OCI-LY7 (cell line): ENCODE measurements at regions of chr1 and their contacts with region 1.

Region 1: GRCh38 chr1:219076326-219076937 is 97.2 kb upstream of the LYPLAL1 start:
- DNase-seq: no peak
- H3K4me3 ChIP-seq: no peak overlapping the region
- H3K27ac ChIP-seq: no peak overlapping the region
- H3K4me1 ChIP-seq: no peaks in the 10 kb centered on the region
- CTCF ChIP-seq: no peak

Region 2: DNA sequence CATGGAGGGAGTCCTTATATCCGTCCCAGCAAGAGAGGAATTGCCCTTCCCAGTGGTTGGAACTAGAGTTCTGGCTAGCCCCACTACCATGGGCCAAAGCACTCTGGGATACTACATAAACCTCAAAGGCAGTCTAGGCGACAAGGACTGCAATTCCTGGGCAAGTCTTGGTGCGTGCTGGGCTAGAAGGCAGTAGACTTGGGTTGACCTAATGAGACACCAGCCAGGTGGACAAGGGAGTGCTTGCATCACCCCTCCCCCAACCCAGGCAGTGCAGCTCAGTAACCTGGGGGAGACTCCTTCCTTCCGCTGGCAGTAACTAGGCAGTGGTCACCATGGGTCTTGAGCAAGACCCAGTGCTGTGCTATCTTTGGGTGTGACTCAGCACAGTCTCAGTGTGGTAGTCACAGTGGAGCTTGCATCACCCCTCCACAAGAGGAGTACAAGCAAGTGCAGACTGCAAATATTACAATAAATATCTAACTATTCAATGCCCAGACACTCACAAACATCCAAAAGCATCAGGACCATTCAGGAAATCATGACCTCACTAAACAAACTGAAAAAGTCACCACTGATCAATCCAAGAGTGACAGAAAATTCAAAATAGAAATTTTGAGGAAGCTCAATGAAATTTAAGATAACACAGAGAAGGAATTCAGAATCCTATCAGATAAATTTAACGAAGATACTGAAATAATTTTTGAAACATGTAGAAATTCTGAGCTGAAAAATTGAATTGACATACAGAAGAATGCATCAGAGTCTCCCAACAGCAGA is 12.5 kb after region 1 on chr1:
- CTCF ChIA-PET with region 1: no interaction called
- POLR2A ChIA-PET with region 1: interaction called, 11 read pairs
- intact Hi-C with region 1: no loop called
- DNase-seq: no peak
- H3K4me3 ChIP-seq: no peak overlapping the region
- H3K27ac ChIP-seq: no peak overlapping the region
- H3K4me1 ChIP-seq: peaks cover 12% of the 10 kb centered on the region
- CTCF ChIP-seq: no peak

Region 3: DNA sequence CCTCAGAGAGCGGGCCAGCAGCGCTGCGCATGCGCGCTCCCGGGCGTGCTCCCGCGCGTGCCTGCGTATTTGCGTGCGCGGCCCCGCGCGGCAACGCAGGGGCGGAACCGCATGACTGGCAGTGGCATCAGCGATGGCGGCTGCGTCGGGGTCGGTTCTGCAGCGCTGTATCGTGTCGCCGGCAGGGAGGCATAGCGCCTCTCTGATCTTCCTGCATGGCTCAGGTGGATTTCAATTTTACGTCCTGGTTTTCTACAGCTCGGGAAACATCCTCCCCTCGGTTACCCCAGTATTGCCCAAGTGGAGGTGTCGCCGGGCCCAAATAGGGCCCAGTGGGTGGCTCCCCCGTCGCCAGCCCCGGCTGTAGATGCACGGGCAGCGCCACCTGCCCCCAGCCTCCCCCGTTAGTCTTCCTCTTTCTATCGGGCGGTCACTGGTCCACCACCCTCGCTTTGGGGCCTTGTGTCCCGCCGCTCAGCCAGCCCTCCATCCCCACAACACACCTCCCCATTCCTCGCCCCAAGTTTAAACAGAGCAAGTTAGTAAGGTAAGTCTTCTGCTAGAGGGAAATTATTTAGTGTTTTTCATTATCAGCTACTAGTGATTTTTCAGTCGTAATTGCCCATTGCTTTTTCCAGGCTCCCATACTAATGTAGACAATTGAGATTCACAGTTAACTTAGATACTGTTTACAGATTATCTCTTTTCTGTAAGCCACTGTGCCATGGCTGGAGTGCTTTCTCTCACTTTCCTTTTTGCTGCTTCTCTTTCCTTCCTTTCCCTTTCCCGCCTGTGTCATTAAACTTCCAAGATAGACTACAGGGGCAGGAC is 97.5 kb after region 1 on chr1 and contains the start of gene LYPLAL1:
- CTCF ChIA-PET with region 1: no interaction called
- POLR2A ChIA-PET with region 1: no interaction called
- intact Hi-C with region 1: no loop called
- DNase-seq: peak; percentile 92
- H3K4me3 ChIP-seq: peak within 1 kb of the TSS; percentile 85
- H3K27ac ChIP-seq: peak within 1 kb of the TSS; percentile 39
- H3K4me1 ChIP-seq: peaks cover 15% of the 10 kb centered on the region
- CTCF ChIP-seq: peak; percentile 47
- total RNA-seq, gene LYPLAL1: 13.2 and 19.6 TPM in 2 replicates